HepG2 (cell line): ENCODE measurements at regions of chr5 and their contacts with region 1.

Region 1: DNA sequence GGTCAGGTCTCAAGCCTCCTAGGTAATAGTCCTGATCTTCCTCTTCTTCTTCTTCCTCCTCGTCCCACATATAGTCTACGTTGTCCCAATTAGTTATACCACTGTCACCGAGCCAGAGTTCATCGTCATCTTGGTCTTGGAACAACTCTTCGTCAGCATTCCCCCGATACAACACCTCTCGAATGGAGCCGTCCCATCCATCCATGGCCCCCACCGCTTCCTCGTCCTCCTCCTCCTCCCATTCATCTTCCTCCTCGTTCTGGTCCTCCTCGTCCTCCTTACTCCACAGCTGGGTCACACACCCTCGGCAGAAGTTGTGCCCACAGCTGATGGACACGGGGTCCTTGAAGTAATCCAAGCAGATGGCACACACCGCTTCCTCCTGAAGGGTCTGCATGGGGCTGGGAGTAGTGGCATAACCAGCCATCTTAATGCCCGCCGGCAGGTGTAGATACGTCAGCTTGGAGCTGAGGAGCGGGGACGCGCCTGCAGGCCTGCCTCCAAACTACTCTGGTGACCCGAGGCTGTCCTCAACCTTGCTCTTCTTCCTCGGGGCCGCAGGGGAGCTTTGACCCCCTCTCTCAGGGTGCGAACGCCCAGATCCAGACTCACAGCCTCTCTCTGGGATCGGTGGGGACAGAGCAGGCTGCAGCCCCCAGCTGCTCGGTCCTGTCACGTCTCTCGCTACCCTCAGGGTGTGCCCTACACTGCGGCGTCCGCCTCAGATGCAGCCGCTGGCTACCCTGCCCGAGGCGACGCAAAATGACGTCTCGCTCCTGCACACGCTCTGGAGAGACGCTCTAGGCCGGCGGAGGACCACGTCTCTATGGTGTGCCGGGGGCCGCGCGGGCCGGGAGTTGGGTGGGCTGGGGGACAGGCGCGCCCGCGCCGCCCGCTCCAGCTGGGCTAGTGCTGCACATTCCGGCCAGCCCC is at the start of gene TRIM52:
- DNase-seq: peak; percentile 91
- ATAC-seq: peak; percentile 93
- H3K4me3 ChIP-seq: peak within 1 kb of the TSS; percentile 86 to 97 (median 94)
- H3K27ac ChIP-seq: peak within 1 kb of the TSS; percentile 90
- H3K4me1 ChIP-seq: peaks cover 42% of the 10 kb centered on the region
- H3K27me3 ChIP-seq: no peaks in the 10 kb centered on the region; a peak in 1 of 5 replicates
- CTCF ChIP-seq: peak; percentile 49
- EP300 ChIP-seq: 0 out of 4 replicates have a peak, but pooled peaks of 1 of the 2 experiments have one; percentile 10
- POLR2A ChIP-seq: peak; percentile 89 to 99
- RAD21 ChIP-seq: peak; percentile 59; the same call in 1 of the 2 replicates
- total RNA-seq, gene TRIM52: 5.7 and 7.2 TPM in 2 replicates

Region 2: DNA sequence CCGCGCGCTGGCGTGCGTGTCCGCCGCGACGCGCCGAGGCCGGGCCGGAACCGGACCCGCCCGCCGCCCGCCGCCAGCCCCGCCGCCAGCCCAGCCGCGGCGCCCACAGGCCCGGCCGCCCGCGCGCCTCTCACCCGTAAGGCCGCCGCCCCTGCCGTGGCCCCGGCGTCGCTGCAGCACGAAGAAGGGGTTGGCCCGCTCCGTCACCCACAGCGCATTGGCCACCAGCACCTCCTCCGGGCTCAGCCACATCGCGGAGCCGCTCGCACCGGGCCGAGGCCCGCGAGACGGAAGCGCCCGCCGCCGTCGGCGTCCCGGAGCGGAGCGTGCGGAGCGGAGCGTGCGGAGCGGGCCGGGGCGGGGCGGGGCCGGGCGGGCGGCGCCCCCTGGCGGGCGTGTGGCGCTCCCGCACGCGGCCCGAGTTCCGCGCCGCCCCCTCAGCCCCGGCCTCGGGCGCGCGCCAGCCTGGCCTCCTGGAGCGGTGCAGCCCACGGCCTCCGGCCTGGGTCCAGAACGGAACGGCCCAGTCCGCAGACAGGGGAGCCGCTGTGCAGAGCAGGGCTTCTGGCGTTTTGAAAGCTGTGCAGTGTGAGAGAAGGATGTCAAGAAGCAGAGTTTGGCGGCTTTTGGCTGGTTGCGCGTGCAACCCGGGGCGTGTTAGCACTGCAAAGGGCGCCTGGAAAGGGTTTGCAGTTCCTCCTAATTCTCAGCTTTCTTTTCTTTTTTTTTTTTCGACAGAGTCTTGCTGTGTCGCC is 1352.9 kb before region 1 on chr5 and contains the start of gene TBC1D9B:
- CTCF ChIA-PET with region 1: no interaction called
- POLR2A ChIA-PET with region 1: no interaction called
- in situ Hi-C with region 1: no loop called
- intact Hi-C with region 1: no loop called
- DNase-seq: peak; percentile 27
- ATAC-seq: peak; percentile 87
- H3K4me3 ChIP-seq: peak within 1 kb of the TSS; percentile 82 to 86 (median 85)
- H3K27ac ChIP-seq: peak within 1 kb of the TSS; percentile 36
- H3K4me1 ChIP-seq: peaks cover 18% of the 10 kb centered on the region
- H3K27me3 ChIP-seq: 0 out of 5 replicates have a peak, but pooled peaks cover 0 to 4% of the 10 kb centered on the region in 2 experiments
- CTCF ChIP-seq: peak; percentile 36; the same call in 1 of the 2 replicates
- EP300 ChIP-seq: no peak
- POLR2A ChIP-seq: peak; percentile 63 to 68
- RAD21 ChIP-seq: no peak; the same call in 1 of the 2 replicates
- total RNA-seq, gene TBC1D9B: 26.8 and 35.0 TPM in 2 replicates

Region 3: GRCh38 chr5:180591311-180591887 is 669.3 kb before region 1 on chr5 and contains the start of gene SCGB3A1:
- CTCF ChIA-PET with region 1: no interaction called
- POLR2A ChIA-PET with region 1: no interaction called
- in situ Hi-C with region 1: no loop called
- intact Hi-C with region 1: no loop called
- DNase-seq: no peak
- ATAC-seq: peak; percentile 48
- H3K4me3 ChIP-seq: peak within 1 kb of the TSS; percentile 28 to 66 (median 40); a peak in 5 of 6 replicates
- H3K27ac ChIP-seq: no peak within 1 kb of the TSS
- H3K4me1 ChIP-seq: peaks cover 18% of the 10 kb centered on the region; the same call in 1 of the 2 replicates
- H3K27me3 ChIP-seq: peaks cover 26 to 70% of the 10 kb centered on the region in 2 experiments
- CTCF ChIP-seq: no peak
- EP300 ChIP-seq: no peak
- POLR2A ChIP-seq: no peak
- RAD21 ChIP-seq: no peak
- total RNA-seq, gene SCGB3A1: not detected in 2 replicates

Region 4: DNA sequence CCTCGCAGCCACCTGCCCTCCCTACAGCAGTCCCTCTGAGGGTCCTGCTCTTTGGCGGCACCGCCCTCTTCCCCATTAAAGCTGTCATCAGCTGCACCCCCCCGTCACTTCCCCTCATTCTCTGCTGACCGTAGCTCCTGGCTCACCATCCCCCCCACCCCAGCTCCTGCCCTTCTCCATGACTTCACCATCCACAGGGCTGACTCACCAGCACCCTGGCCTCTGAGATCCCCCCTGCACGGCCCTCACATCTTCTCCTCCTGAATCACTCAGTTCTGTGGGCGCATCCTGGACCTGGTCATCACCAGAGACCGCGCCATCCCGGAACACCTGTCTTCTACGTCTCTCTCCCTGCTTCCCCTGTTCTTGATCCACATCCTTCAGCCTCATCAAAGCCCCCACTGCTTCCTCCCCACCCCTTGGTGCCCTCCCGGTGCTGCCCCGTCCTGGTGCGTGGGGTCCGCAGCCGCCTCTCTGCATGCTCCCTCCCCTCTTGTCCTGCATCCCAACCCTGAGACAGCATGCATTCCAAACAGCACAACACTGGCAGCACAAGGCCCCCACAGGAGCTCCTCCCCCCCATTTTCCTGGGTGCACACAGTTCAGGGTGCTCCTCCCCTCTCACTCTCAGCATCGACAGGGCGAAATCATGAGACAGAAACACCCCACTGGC is 624.1 kb before region 1 on chr5:
- CTCF ChIA-PET with region 1: no interaction called
- POLR2A ChIA-PET with region 1: no interaction called
- in situ Hi-C with region 1: no loop called
- intact Hi-C with region 1: no loop called
- DNase-seq: no peak
- ATAC-seq: no peak
- H3K4me3 ChIP-seq: no peak overlapping the region
- H3K27ac ChIP-seq: no peak overlapping the region
- H3K4me1 ChIP-seq: no peaks in the 10 kb centered on the region
- H3K27me3 ChIP-seq: peaks cover 7 to 36% of the 10 kb centered on the region in 2 experiments; a peak in 4 of 5 replicates
- CTCF ChIP-seq: no peak
- EP300 ChIP-seq: no peak
- POLR2A ChIP-seq: no peak
- RAD21 ChIP-seq: no peak

Region 5: DNA sequence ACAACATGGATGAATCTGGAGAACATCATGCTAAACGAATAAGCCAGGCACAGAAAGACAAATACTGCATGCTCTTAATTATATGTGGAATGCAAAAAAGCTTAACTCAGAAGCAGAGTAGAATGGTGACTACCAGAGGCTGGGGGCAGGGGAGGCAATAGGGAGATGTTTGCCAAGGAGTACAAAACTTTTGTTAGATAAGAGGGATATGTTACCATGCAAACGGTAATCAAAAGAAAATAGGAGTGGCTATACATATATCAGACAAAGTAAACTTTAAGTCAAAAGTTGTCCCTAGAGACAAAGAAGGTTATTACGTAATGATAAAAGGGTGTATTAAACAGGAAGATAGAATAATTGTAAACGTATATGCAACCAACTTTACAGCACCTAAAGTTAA is 289.8 kb before region 1 on chr5:
- CTCF ChIA-PET with region 1: no interaction called
- POLR2A ChIA-PET with region 1: no interaction called
- in situ Hi-C with region 1: no loop called
- intact Hi-C with region 1: no loop called
- DNase-seq: no peak
- ATAC-seq: no peak
- H3K4me3 ChIP-seq: no peak overlapping the region
- H3K27ac ChIP-seq: no peak overlapping the region
- H3K4me1 ChIP-seq: no peaks in the 10 kb centered on the region
- H3K27me3 ChIP-seq: no peaks in the 10 kb centered on the region; a peak in 2 of 5 replicates
- CTCF ChIP-seq: no peak
- EP300 ChIP-seq: no peak
- POLR2A ChIP-seq: no peak
- RAD21 ChIP-seq: no peak

Region 6: GRCh38 chr5:181181650-181182565 is 78.7 kb before region 1 on chr5:
- CTCF ChIA-PET with region 1: no interaction called
- POLR2A ChIA-PET with region 1: interaction called, 10 read pairs
- in situ Hi-C with region 1: no loop called
- intact Hi-C with region 1: no loop called
- DNase-seq: peak; percentile 74
- ATAC-seq: peak; percentile 79
- H3K4me3 ChIP-seq: peak overlapping the region in 2 of 3 experiments; percentile 25 to 46; a peak in 1 of 6 replicates
- H3K27ac ChIP-seq: no peak overlapping the region
- H3K4me1 ChIP-seq: peaks cover 58% of the 10 kb centered on the region
- H3K27me3 ChIP-seq: no peaks in the 10 kb centered on the region
- CTCF ChIP-seq: peak; percentile 95
- EP300 ChIP-seq: no peak
- POLR2A ChIP-seq: no peak
- RAD21 ChIP-seq: peak; percentile 55

Region 7: GRCh38 chr5:181191529-181192394 is 68.9 kb before region 1 on chr5:
- CTCF ChIA-PET with region 1: no interaction called
- POLR2A ChIA-PET with region 1: interaction called, 12 read pairs
- in situ Hi-C with region 1: no loop called
- intact Hi-C with region 1: no loop called
- DNase-seq: peak; percentile 88
- ATAC-seq: peak; percentile 65
- H3K4me3 ChIP-seq: peak overlapping the region; percentile 80 to 93 (median 81)
- H3K27ac ChIP-seq: peak overlapping the region; percentile 81
- H3K4me1 ChIP-seq: peaks cover 28% of the 10 kb centered on the region
- H3K27me3 ChIP-seq: no peaks in the 10 kb centered on the region; a peak in 1 of 5 replicates
- CTCF ChIP-seq: peak; percentile 53
- EP300 ChIP-seq: 0 out of 4 replicates have a peak, but pooled peaks of 1 of the 2 experiments have one; percentile 10
- POLR2A ChIP-seq: peak in 1 of 2 experiments; percentile 51; a peak in 1 of 4 replicates
- RAD21 ChIP-seq: 0 out of 2 replicates have a peak, but pooled peaks have one; percentile 13